ENCODE measurements at regions of chr7 and their contacts with region 1.

Region 1: DNA sequence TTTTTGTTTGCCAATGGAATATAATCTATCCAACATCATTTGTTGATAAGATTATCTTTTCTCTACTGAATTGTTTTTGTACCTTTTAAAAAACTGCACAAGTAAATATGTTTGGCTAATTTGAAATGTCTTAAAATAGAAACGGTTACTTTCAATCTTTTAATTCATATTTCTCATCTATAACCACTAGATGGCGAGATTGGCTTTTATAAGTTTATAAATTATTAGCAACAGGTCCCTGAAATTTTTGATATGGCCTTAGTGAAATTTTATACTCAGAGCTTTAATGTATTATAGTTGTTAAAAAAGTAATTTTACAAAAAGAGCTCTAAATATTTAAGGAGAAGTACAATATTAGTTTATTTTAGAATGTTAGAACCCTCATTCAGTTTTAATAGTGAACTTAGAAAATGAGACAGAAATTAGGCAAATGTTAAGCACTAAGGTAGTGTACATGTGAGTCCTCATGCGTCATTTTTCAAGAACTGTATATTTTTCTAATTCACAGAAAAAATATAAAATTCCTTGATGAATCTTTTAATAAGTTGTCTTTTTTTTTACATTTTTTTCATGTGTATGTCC is 592.5 kb downstream of the ARL4A start:
- DNase-seq: peak; percentile 10
- ATAC-seq: no peak
- H3K4me3 ChIP-seq: no peak overlapping the region
- H3K27ac ChIP-seq: no peak overlapping the region
- H3K4me1 ChIP-seq: no peaks in the 10 kb centered on the region
- H3K27me3 ChIP-seq: no peaks in the 10 kb centered on the region
- CTCF ChIP-seq: peak; percentile 39
- POLR2A ChIP-seq: no peak
- RAD21 ChIP-seq: peak; percentile 30

Region 2: DNA sequence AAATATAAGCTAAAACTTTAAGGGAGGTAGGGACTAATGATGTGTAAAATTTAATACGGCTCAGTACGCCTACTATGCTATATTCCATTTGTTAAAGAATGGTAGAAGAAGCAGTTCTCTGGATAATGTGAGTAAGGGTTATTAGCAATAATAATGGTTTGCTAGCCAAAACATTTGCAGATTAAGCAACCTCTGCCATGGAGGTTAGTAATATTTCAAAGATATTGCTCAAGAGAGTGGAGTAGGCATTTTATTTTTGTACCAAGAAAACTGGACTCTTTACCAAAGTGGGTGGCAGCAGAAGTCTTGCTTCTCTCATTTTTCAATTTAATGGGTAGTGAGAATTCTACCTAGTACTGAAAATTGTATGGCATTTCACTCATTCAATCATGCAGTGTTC is 1227.7 kb before region 1 on chr7:
- CTCF ChIA-PET with region 1: no interaction called
- POLR2A ChIA-PET with region 1: no interaction called
- dilution Hi-C with region 1: no loop called
- in situ Hi-C with region 1: no loop called
- intact Hi-C with region 1: no loop called
- DNase-seq: no peak
- ATAC-seq: no peak
- H3K4me3 ChIP-seq: no peak overlapping the region
- H3K27ac ChIP-seq: no peak overlapping the region
- H3K4me1 ChIP-seq: peaks cover 5% of the 10 kb centered on the region
- H3K27me3 ChIP-seq: no peaks in the 10 kb centered on the region
- CTCF ChIP-seq: no peak
- POLR2A ChIP-seq: no peak
- RAD21 ChIP-seq: no peak

Region 3: DNA sequence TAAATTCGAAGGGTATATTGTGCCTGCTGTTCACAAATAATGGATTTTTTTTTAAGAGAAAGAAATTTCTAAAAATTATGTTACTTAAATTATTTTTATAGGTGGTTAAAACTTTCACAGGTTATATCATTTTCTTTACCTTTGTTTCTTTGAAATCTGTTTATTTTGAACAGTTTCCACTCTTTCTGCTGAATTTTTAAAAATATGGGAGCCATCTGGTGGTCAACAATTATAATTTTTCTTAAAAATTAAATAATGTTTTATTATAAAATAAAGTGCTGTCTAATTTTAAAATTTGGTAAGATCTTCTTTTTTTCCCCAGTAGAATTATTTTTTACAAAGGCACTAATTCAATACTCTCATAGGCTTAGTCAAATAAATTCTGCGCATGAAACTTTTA is 445.6 kb after region 1 on chr7:
- CTCF ChIA-PET with region 1: no interaction called
- POLR2A ChIA-PET with region 1: no interaction called
- dilution Hi-C with region 1: no loop called
- in situ Hi-C with region 1: loop called (anchors 25 kb)
- intact Hi-C with region 1: loop called (anchors 5 kb)
- DNase-seq: no peak
- ATAC-seq: no peak
- H3K4me3 ChIP-seq: no peak overlapping the region
- H3K27ac ChIP-seq: no peak overlapping the region
- H3K4me1 ChIP-seq: no peaks in the 10 kb centered on the region
- H3K27me3 ChIP-seq: no peaks in the 10 kb centered on the region
- CTCF ChIP-seq: 0 out of 2 replicates have a peak, but pooled peaks have one; percentile 5
- POLR2A ChIP-seq: no peak
- RAD21 ChIP-seq: 0 out of 2 replicates have a peak, but pooled peaks have one; percentile 6

Region 4: GRCh38 chr7:13910805-13911551 is 631.0 kb after region 1 on chr7:
- CTCF ChIA-PET with region 1: no interaction called
- POLR2A ChIA-PET with region 1: no interaction called
- dilution Hi-C with region 1: no loop called
- in situ Hi-C with region 1: no loop called
- intact Hi-C with region 1: loop called (anchors 10 kb)
- DNase-seq: no peak
- ATAC-seq: no peak
- H3K4me3 ChIP-seq: no peak overlapping the region
- H3K27ac ChIP-seq: no peak overlapping the region
- H3K4me1 ChIP-seq: peaks cover 2% of the 10 kb centered on the region; the same call in 1 of the 2 replicates
- H3K27me3 ChIP-seq: no peaks in the 10 kb centered on the region
- CTCF ChIP-seq: no peak
- POLR2A ChIP-seq: no peak
- RAD21 ChIP-seq: no peak

Region 5: DNA sequence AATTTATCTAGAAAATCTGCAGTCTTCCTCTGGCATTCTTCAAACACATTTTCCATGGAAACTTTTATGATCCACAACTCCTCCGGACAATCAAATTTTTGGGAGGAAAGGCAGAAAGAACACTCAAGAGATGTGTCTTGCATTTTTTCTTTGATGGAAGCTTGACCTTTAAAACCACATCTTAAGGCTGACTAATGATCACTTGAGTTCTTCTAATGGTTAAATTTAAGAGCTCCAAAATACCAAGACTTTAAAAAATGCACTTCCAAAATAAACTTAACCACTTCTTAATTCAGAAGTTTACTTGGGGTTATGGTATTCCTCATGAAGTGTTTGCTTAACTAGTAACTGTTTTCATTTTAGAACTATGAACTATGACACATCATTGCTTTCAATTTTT is 666.2 kb after region 1 on chr7:
- CTCF ChIA-PET with region 1: no interaction called
- POLR2A ChIA-PET with region 1: no interaction called
- dilution Hi-C with region 1: no loop called
- in situ Hi-C with region 1: no loop called
- intact Hi-C with region 1: no loop called
- DNase-seq: peak; percentile 65
- ATAC-seq: peak; percentile 93
- H3K4me3 ChIP-seq: no peak overlapping the region
- H3K27ac ChIP-seq: no peak overlapping the region
- H3K4me1 ChIP-seq: peaks cover 2% of the 10 kb centered on the region; the same call in 1 of the 2 replicates
- H3K27me3 ChIP-seq: no peaks in the 10 kb centered on the region
- CTCF ChIP-seq: no peak
- POLR2A ChIP-seq: no peak
- RAD21 ChIP-seq: no peak

Region 6: DNA sequence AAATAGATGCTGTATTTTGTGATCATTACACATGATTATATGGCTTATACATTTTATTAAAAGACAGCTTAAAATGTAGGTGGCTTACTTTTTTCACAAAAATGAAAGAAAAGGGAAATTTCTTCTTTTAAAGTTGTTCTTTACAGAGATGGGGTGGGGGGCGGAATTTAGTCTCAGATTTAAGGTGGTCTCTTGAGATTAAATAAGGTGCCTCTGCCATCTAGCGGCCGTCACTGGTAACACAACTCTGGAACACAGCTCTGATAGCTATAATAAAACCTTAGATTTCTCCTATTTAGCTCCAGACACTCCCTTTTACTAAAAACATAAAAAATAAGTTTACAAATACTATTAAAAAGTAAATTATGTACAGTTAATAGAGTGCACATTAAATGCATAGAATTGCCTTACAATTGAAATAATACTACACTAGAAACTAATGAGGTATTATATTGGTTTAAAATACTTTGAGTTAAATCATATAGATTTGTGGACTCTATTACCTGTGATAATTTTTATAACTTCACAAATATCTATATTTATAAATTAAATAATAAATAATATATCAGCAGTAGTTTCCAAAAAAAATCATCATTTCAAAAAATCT is 1411.8 kb after region 1 on chr7:
- CTCF ChIA-PET with region 1: interaction called, 43 read pairs
- POLR2A ChIA-PET with region 1: no interaction called
- dilution Hi-C with region 1: no loop called
- in situ Hi-C with region 1: loop called (anchors 5 kb)
- intact Hi-C with region 1: loop called (anchors 1 kb)
- DNase-seq: peak; percentile 30
- ATAC-seq: peak; percentile 53; the same call in 1 of the 2 replicates
- H3K4me3 ChIP-seq: no peak overlapping the region
- H3K27ac ChIP-seq: no peak overlapping the region
- H3K4me1 ChIP-seq: no peaks in the 10 kb centered on the region
- H3K27me3 ChIP-seq: no peaks in the 10 kb centered on the region
- CTCF ChIP-seq: peak; percentile 75
- POLR2A ChIP-seq: no peak
- RAD21 ChIP-seq: peak; percentile 66